K562 (cell line): ENCODE measurements at regions of chr3 and their contacts with region 1.

Region 1: DNA sequence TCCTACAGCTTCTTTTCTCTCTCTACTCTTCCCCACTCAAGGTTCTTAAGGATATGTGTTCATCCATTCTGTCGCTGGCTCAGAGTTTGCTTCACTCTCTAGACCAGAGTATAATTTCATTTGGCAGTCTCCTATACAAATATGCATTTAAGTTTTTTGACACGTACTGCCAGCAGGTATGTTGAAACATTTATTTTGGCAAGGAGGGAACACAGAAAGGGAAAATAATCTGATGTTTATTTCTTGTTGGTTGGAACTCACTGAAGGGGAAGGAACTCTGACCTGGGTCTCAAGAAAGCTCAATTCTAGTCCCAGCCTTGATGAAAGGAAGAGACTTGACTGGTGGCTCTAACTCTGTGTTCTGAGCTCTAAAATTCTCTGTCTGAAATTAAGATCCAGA is 21.6 kb downstream of the FANCD2 start:
- DNase-seq: no peak
- ATAC-seq: no peak
- H3K4me3 ChIP-seq: no peak overlapping the region
- H3K27ac ChIP-seq: no peak overlapping the region
- H3K4me1 ChIP-seq: no peaks in the 10 kb centered on the region
- H3K27me3 ChIP-seq: no peaks in the 10 kb centered on the region
- CTCF ChIP-seq: no peak
- EP300 ChIP-seq: no peak
- POLR2A ChIP-seq: no peak
- RAD21 ChIP-seq: no peak

Region 2: GRCh38 chr3:9994086-9994844 is 53.6 kb before region 1 on chr3:
- CTCF ChIA-PET with region 1: no interaction called
- POLR2A ChIA-PET with region 1: no interaction called
- in situ Hi-C with region 1: loop called (anchors 5 kb)
- intact Hi-C with region 1: no loop called
- DNase-seq: no peak
- ATAC-seq: no peak
- H3K4me3 ChIP-seq: no peak overlapping the region
- H3K27ac ChIP-seq: no peak overlapping the region
- H3K4me1 ChIP-seq: no peaks in the 10 kb centered on the region; a peak in 1 of 5 replicates
- H3K27me3 ChIP-seq: no peaks in the 10 kb centered on the region
- CTCF ChIP-seq: no peak
- EP300 ChIP-seq: no peak
- POLR2A ChIP-seq: no peak
- RAD21 ChIP-seq: no peak

Region 3: DNA sequence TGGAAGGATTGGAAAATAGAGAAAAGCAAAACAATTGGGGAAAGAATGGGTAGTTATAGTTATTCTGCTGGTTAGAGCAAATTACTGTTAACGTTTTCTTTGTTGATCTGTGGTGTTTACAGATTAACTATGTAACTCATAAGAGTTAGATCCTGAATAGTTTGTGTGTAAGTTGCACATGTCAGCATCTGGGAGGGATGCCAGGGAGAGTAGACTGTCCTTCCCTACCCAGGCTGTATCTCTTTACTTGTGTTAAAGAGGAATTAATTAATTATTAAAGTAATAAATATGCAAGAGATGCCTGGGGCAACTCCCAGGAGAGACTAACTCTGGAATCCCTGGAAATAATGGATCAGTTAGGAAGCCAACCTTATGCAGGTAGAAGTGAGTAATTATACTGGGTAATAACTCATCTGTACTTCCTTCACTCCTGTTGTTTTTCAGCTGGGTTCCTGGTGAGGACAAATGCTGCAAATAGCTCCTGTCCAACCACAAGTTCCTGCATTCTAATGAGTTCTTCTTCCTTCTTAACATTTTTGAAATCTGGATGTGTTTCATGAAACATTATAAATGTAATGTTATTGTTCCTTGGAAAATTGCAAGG is 225.9 kb after region 1 on chr3:
- CTCF ChIA-PET with region 1: no interaction called
- POLR2A ChIA-PET with region 1: no interaction called
- in situ Hi-C with region 1: no loop called
- intact Hi-C with region 1: no loop called
- DNase-seq: no peak
- ATAC-seq: no peak
- H3K4me3 ChIP-seq: no peak overlapping the region
- H3K27ac ChIP-seq: no peak overlapping the region
- H3K4me1 ChIP-seq: peaks cover 0 to 15% of the 10 kb centered on the region in 2 experiments; a peak in 2 of 5 replicates
- H3K27me3 ChIP-seq: no peaks in the 10 kb centered on the region
- CTCF ChIP-seq: no peak
- EP300 ChIP-seq: no peak
- POLR2A ChIP-seq: no peak
- RAD21 ChIP-seq: no peak

Region 4: DNA sequence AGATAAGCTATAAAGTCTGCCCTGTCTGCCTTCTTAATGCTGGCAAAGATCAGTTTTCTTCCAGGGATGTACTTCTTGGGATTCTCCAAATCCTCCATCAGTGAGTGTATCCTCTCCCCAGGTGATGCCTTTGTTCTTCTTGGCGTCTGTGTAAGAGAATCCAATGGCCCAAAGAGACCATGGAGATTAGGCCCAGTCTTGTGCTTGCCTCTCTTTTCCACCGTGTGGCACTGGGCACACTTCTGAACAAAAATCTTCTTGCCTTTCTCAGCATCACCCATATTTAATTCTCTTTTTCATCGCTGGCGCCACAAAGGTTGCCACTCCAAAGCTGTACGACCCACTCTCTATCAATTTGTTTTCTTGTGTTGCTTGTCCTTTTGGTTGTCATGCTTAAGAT is 1831.0 kb after region 1 on chr3:
- CTCF ChIA-PET with region 1: no interaction called
- POLR2A ChIA-PET with region 1: no interaction called
- in situ Hi-C with region 1: loop called (anchors 5 kb)
- intact Hi-C with region 1: no loop called
- DNase-seq: no peak
- ATAC-seq: no peak
- H3K4me3 ChIP-seq: no peak overlapping the region
- H3K27ac ChIP-seq: no peak overlapping the region
- H3K4me1 ChIP-seq: no peaks in the 10 kb centered on the region
- H3K27me3 ChIP-seq: peaks cover 3 to 12% of the 10 kb centered on the region in 2 experiments; a peak in 3 of 5 replicates
- CTCF ChIP-seq: no peak
- EP300 ChIP-seq: no peak
- POLR2A ChIP-seq: no peak
- RAD21 ChIP-seq: no peak